Heart left ventricle (tissue), 16 donors: ENCODE measurements at regions of chr11 and their contacts with region 1.

Region 1: DNA sequence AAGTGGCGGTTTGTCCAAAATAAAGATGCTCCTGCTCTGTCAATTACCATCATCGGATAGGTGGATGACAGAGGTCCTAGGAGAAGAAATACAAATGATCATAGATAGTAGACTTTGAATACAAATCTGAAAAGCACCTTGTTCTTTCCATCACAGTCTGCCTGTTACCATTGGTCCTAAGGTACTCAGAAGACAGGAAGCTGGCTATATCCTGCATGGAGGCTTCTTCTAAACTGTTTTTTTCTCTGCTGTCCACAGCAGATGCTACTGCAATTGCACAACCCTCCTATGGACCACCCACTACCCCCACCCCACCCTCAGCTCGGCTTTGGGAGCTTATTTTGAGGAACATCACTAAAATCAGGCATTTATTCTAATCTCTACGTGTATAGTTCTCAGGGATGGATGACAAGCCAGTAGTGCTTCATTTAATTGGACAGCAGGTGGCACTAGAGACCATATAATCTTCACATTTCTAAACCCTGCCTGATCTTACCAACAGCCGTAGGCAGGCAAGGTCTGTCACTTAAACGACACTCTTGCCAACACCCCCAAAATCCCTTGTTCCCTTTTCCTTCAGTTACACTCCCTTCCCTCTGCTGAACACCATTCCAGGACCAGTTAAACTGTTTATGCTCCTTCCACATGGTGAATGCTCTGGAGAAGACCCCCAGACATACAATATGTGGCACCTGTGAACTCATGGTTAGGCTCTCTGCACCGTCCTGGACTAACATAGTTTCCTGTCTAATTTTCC is 6.6 kb upstream of the PTS start:
- DNase-seq: peak in 2 of 5 donors; percentile 28 to 29
- ATAC-seq: peak; percentile 57 to 92 (median 90)
- H3K4me3 ChIP-seq: no peak overlapping the region
- H3K27ac ChIP-seq: no peak overlapping the region
- H3K4me1 ChIP-seq: peaks cover 0 to 5% (median 0%) of the 10 kb centered on the region in 12 donors
- H3K27me3 ChIP-seq: no peaks in the 10 kb centered on the region
- CTCF ChIP-seq: peak; percentile 61 to 84 (median 74)
- POLR2A ChIP-seq: no peak

Region 2: DNA sequence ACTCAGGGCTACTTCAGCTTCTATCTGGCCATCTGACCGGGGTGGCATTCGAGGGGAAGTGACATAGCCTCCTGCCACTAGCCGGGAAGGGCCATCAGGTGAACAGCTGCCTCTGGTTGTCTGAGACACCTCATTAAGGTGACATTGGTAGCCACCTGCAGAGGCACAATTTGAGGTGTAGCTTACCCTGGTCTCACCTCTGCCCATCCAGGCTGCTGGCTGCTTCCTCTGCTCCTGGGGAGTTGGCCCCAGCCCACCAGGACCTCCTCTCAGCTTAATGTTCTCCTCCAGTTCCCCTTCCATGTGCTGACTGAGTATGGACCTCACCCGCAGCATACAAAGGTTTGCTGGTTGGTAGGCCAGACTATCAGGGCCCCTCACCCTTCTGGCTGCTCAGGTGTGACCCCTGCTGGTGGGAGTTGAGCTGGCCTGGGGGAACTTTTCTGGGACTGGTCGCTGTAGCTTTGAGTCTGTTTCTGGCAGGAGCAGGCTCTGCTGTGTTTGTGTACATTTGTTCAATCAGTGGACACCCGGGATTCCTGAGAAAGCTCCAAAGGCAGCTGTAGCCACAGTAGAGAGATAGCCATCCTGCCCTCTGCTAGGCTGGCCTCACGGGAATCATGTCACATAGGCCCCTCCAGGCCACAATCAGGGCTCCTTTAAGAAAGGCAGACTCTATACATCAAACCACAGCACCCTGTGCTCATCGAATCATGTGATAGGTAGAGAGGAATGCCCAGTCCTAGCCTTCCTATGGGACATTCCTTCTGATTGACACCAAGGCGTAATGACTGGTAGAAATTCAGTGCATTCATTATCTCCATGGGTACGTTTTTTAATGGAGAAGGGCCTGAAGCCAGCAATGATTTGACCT is 336.1 kb after region 1 on chr11:
- intact Hi-C with region 1: loop called in 2 of 10 experiments (anchors 10 kb)
- DNase-seq: peak; percentile 35 to 72 (median 57)
- ATAC-seq: peak; percentile 43 to 88 (median 74)
- H3K4me3 ChIP-seq: no peak overlapping the region
- H3K27ac ChIP-seq: no peak overlapping the region
- H3K4me1 ChIP-seq: no peaks in the 10 kb centered on the region
- H3K27me3 ChIP-seq: no peaks in the 10 kb centered on the region
- CTCF ChIP-seq: peak; percentile 50 to 71 (median 66)
- POLR2A ChIP-seq: no peak

Region 3: DNA sequence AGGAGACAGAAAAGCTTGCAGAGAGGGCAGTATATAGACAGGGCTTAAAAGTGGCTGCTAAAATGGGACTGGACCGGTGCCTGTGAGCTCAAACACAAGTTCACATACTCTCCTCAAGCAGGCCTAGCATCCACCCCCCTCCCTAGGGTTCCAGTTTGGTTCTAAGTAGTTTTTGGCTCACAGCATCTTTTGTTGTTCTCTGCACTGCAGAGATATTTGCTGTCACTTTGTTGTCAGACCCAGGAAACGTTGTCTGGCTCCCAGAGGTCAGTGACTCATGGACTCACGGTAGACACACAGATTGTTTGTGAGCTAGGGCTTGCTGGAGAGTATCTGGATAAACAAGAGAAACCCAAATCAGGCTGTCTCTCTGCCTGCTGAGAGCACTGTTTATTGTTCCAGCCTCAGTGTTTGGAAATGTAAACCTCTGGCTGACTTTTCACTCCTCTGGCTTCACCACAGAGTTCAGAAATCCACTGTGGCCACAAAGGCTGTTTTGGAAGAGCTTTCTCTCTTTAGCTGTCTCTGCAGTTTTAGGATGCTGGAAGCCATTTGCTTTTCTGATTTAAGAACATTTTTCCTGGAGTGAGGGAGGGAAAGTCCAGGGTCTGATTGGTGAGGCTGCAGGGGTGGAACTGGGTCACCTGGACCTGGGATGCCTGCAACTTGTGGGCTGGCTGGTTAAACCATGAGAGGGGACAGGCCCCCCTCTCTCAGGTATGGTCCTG is 344.7 kb after region 1 on chr11:
- intact Hi-C with region 1: loop called in 2 of 10 experiments (anchors 10 kb)
- DNase-seq: peak in 3 of 5 donors; percentile 16 to 63 (median 61)
- ATAC-seq: peak; percentile 88 to 92 (median 90)
- H3K4me3 ChIP-seq: no peak overlapping the region
- H3K27ac ChIP-seq: peak overlapping the region; percentile 43 to 80 (median 62)
- H3K4me1 ChIP-seq: peaks cover 0 to 19% (median 4%) of the 10 kb centered on the region in 12 donors
- H3K27me3 ChIP-seq: peaks cover 0 to under 1% (median 0%) of the 10 kb centered on the region in 9 donors
- CTCF ChIP-seq: no peak
- POLR2A ChIP-seq: no peak

Region 4: GRCh38 chr11:113289431-113290187 is 1070.0 kb after region 1 on chr11:
- intact Hi-C with region 1: loop called in 2 of 10 experiments (anchors 10 kb)
- DNase-seq: peak; percentile 42 to 77 (median 54)
- ATAC-seq: peak; percentile 73 to 79 (median 77)
- H3K4me3 ChIP-seq: no peak overlapping the region
- H3K27ac ChIP-seq: no peak overlapping the region
- H3K4me1 ChIP-seq: peaks cover 0 to 9% (median 0%) of the 10 kb centered on the region in 12 donors
- H3K27me3 ChIP-seq: peaks cover 0 to 8% (median 0%) of the 10 kb centered on the region in 9 donors
- CTCF ChIP-seq: peak; percentile 79 to 93 (median 88)
- POLR2A ChIP-seq: no peak

Region 5: DNA sequence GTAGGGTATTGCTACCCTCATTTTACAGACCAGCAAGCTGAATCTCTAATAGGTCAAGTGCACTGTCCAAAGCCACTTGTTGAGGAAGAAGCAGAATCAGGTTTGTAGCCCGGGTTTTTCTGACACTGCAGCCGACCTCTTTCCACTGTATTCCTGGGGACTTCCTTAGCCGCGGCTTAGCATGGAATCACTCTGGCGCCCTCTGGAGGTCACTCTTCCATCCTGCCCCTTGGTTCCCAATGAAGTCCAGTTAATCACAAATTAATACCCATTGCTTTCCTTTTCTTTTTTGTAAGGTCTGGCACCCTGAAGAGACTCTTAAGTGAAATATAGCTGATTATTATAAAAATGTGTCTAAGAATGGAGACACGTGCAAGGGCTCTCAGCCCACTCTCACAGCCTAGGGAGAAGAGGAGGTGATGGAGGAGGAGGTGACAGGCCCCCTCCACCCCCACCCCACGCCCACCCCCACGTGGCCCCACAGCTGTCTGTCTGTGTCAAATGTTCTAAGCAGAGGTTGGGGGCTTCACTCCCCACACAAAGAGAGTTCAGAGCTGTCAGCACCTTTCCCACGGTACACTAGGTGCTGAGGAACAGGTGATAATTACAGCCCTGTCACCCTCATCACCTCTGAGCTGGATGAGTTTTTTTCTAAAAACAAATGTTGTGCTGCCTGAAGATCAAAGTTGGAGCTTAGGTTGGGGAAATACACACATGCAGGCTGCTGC is 1313.2 kb after region 1 on chr11:
- intact Hi-C with region 1: loop called in 1 of 10 experiments (anchors 10 kb)
- DNase-seq: peak; percentile 53 to 79 (median 75)
- ATAC-seq: peak; percentile 55 to 89 (median 74)
- H3K4me3 ChIP-seq: no peak overlapping the region
- H3K27ac ChIP-seq: no peak overlapping the region
- H3K4me1 ChIP-seq: peaks cover 0 to 8% (median 0%) of the 10 kb centered on the region in 12 donors
- H3K27me3 ChIP-seq: peaks cover 0 to 12% (median 0%) of the 10 kb centered on the region in 9 donors
- CTCF ChIP-seq: peak; percentile 79 to 92 (median 85)
- POLR2A ChIP-seq: no peak